Activated B cell treated with CpG ODN at 0.5 μM for 24 hours (primary cell): ENCODE measurements at regions of chr3 and their contacts with region 1.

Region 1: DNA sequence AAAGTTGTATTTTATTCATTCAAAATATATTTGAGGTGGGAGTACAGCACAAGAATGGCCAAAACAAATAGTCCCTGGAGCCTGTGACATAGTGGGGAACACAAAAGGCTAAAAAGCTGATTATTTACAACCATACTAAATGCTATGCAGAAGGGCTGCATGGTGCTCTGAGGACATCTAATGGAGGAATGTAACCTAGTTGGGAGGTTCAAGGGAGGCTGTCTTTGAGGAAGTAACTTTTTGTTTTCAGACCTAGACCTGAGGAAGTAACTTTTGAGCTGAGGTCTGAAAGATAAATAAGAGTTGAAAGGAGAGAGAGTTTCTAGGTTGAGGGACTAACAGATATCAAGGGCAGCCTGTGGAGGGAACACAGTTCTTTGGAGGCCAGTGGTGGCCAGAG is 34.8 kb upstream of the RASA2 start:
- DNase-seq: no peak
- ATAC-seq: peak; percentile 87
- H3K4me3 Mint-ChIP-seq: no peak overlapping the region
- H3K27ac Mint-ChIP-seq: no peak overlapping the region
- H3K4me1 Mint-ChIP-seq: peaks cover 5% of the 10 kb centered on the region
- H3K27me3 Mint-ChIP-seq: no peaks in the 10 kb centered on the region
- CTCF ChIP-seq: no peak

Region 2: GRCh38 chr3:141000027-141000663 is 451.9 kb before region 1 on chr3:
- CTCF ChIA-PET with region 1: no interaction called
- POLR2A ChIA-PET with region 1: no interaction called
- intact Hi-C with region 1: loop called (anchors 10 kb)
- DNase-seq: no peak
- ATAC-seq: no peak
- H3K4me3 Mint-ChIP-seq: no peak overlapping the region
- H3K27ac Mint-ChIP-seq: no peak overlapping the region
- H3K4me1 Mint-ChIP-seq: no peaks in the 10 kb centered on the region
- H3K27me3 Mint-ChIP-seq: peaks cover 8% of the 10 kb centered on the region
- CTCF ChIP-seq: no peak

Region 3: DNA sequence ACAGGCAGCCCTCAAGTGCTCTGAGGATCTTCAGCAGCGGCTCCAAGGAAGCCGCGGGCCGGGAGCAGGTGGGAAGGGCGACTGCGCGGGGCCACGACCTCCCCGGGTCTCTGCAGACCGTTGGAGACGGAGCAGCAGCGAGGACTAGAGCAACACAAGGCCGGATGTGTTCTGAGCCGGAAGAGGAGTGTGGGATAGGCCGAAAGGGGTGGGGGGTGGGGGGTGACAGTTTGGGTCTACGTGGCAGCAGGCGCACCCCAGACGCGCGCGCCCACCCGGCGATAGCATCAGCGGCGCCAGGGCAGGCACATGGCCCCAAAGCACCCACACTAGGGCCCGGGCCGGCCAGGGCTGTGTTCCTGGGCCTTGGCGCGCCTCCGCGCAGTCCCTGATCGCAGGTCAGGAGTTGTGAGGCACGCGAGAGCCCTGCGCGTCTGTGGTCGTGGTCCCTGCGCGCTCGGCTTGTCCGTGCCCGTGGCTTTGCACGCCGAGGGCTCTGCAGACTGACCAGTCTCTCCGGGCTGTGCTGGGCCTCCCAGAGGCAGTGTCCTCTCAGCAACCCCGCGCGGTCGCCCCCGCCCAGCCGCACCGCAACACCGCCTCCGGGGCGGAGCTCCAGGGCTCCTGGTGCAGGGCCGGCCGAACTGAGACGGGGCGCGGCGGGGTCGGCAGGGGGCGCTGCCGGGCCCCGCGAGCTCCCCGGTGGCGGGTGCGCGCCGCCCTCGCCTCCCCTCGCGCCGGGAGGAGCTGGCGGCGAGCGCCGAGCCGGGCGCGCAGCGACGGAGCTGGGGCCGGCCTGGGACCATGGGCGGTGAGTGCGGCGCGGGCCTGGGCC is 220.7 kb before region 1 on chr3 and contains the start of gene PXYLP1:
- CTCF ChIA-PET with region 1: interaction called, 11 read pairs
- POLR2A ChIA-PET with region 1: interaction called, 8 read pairs
- intact Hi-C with region 1: loop called (anchors 1 kb)
- DNase-seq: peak; percentile 91
- ATAC-seq: peak; percentile 96
- H3K4me3 Mint-ChIP-seq: peak within 1 kb of the TSS; percentile 93
- H3K27ac Mint-ChIP-seq: peak within 1 kb of the TSS; percentile 94
- H3K4me1 Mint-ChIP-seq: peaks cover 16% of the 10 kb centered on the region
- H3K27me3 Mint-ChIP-seq: no peaks in the 10 kb centered on the region
- CTCF ChIP-seq: no peak
- total RNA-seq, gene PXYLP1: 2.3 and 2.7 TPM in 2 replicates

Region 4: DNA sequence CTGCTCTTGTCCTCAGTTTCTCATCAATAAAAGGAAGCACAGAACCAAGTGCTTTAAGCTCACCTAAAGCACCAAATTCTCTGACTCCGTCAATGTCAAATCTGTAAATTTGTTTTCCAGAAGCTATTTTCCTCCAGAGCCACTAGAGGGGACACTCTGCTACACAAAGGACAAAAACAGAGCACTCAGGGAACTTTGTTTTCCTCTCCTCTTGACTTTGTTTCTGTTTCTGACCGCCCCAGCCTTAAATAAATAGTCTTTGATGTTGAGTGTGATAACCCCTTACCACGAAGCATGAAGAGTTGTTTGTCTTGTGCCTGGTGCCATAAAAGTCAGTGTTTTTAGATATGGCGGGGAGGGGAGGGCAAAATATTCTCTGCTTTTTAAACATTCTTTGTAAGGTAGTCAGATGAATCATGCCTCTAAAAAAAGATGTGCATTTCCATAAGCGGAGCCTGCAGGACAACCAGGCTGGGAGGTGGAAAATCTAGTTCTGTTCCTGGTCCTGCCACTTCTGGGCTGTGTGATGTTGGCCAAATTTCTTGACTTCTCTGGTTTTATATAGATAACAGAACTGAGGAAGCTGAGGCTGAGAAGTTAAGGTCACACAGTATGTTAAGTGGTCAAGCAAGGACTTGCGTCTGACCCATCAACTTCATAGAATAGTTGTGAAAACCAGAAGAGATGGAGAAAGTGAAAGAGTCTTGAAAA is 91.0 kb before region 1 on chr3:
- CTCF ChIA-PET with region 1: interaction called, 64 read pairs
- POLR2A ChIA-PET with region 1: interaction called, 5 read pairs
- intact Hi-C with region 1: loop called (anchors 1 kb)
- DNase-seq: no peak
- ATAC-seq: peak; percentile 49
- H3K4me3 Mint-ChIP-seq: peak overlapping the region; percentile 13
- H3K27ac Mint-ChIP-seq: no peak overlapping the region
- H3K4me1 Mint-ChIP-seq: peaks cover 7% of the 10 kb centered on the region
- H3K27me3 Mint-ChIP-seq: peaks cover 3% of the 10 kb centered on the region
- CTCF ChIP-seq: no peak

Region 5: DNA sequence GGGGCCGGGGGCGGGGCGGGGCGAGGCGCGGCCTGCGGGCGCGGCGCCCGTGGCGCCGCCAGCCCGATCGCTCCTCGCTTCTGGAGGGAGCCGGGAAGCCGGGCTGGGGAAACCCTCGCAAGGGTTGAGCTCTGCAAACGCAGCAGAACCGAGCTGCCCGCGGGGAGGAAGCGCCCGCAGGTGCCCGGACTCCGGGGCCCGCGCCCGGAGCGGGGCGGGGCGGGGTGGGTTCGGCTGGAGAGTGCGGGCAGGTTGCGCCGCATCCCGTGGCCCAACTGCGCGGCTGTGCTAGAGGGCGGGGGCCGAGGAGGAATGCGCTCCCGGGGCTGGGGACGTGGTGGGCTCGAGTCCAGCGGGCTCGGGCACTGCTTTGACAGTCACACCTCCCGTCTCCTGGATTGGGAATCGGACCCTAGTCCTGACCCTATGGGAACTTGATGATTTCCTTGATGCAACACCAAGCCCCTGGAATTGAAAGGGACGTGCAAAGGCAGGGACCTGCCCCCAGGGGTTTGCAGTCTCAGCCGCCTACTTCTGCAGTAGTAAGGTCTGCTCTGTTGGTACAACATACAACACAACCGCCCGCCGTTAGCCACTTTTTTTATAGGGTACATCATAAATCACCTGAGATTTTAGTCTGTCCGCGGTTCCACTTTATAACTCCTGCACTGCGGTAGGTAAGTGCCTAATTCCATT is 49.4 kb before region 1 on chr3:
- CTCF ChIA-PET with region 1: interaction called, 7 read pairs
- POLR2A ChIA-PET with region 1: no interaction called
- intact Hi-C with region 1: loop called (anchors 2 kb)
- DNase-seq: peak; percentile 63
- ATAC-seq: peak; percentile 67
- H3K4me3 Mint-ChIP-seq: peak overlapping the region; percentile 91
- H3K27ac Mint-ChIP-seq: peak overlapping the region; percentile 89
- H3K4me1 Mint-ChIP-seq: peaks cover 56% of the 10 kb centered on the region
- H3K27me3 Mint-ChIP-seq: no peaks in the 10 kb centered on the region
- CTCF ChIP-seq: no peak

Region 6: DNA sequence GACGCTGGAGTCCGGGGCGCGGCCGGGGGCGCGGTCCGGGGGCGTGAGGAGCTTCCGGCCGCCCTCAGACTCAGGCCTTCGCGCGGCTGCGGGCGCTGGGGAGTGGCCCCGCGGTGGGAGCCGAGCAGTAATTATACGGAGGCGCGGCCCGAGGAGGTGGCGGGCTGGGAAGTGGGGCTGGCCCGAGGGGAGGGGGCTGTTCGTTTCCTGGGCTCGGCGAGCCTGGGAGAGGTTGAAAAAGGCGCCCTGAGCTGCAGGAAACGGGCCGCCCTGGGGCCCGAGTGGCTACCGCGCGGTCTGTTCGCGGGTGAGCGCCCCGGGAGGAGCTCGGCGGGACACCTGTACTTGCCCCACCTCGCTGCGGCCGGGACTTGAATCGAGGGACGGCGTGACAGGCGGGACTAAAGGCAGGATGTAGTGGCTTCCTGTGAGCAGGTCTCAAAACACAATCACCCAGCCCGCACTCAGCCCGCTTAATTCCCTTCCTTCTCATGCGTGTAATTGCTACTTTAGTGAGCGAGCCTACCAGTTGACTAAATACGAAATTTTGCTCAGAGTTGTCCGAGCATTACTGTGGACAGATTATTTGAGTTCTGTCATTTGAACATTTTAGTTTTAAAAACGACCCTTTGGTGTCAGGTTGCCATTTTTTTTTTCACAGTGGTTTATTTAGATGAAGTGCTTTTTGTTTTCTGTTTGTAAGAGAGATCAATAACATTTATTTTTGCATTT is 35.7 kb after region 1 on chr3:
- CTCF ChIA-PET with region 1: no interaction called
- POLR2A ChIA-PET with region 1: interaction called, 3 read pairs
- intact Hi-C with region 1: loop called (anchors 2 kb)
- DNase-seq: no peak
- ATAC-seq: peak; percentile 73
- H3K4me3 Mint-ChIP-seq: peak overlapping the region; percentile 84
- H3K27ac Mint-ChIP-seq: peak overlapping the region; percentile 92
- H3K4me1 Mint-ChIP-seq: peaks cover 76% of the 10 kb centered on the region
- H3K27me3 Mint-ChIP-seq: no peaks in the 10 kb centered on the region
- CTCF ChIP-seq: no peak